Activated B cell treated with CpG ODN at 0.5 μM for 24 hours (primary cell): ENCODE measurements at regions of chr1 and their contacts with region 1.

Region 1: DNA sequence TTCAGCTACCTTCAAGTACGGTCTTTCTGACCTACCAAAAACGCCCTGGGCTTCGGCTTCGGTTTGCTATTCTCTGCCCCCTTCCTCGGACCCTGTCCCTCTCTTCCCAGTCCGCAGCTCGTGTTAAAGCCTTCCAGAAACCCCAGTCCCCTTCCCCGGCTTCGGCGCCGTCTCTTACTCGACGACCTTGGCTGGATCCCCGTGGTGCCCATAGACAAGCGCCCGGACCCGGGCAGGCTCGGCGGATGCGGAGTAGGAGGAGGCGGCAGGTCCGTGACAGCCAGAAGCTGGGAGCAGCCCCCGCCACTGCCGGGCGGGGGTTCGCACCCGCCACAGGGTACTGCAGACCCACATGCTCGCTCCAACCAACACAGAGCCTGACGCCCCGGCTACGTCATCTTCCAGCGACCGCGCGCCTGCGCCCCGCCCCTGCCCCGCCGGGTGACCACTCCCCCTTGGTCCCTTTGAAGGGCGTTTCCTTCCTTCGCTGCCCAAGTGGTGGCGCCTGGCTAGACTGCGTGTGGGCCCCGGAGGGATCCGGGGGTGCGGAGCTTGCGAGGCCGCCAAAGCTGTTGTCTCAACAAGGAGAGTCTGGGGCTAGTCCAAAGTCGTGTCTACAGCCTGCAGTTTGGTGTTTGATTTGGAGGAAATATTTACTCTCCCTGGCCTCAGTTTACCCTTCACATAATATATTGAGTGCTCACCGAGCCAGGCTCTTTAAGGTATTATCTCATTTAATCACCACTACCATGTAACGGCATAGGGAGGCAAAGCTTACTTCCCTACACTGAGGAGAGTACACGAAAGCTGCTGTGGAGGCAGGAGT is at the start of gene MECR:
- DNase-seq: peak; percentile 98
- ATAC-seq: peak; percentile 97
- H3K4me3 Mint-ChIP-seq: peak within 1 kb of the TSS; percentile 93
- H3K27ac Mint-ChIP-seq: peak within 1 kb of the TSS; percentile 84
- H3K4me1 Mint-ChIP-seq: peaks cover 18% of the 10 kb centered on the region
- H3K27me3 Mint-ChIP-seq: peaks cover 11% of the 10 kb centered on the region
- CTCF ChIP-seq: no peak
- total RNA-seq, gene MECR: 18.7 and 23.7 TPM in 2 replicates

Region 2: DNA sequence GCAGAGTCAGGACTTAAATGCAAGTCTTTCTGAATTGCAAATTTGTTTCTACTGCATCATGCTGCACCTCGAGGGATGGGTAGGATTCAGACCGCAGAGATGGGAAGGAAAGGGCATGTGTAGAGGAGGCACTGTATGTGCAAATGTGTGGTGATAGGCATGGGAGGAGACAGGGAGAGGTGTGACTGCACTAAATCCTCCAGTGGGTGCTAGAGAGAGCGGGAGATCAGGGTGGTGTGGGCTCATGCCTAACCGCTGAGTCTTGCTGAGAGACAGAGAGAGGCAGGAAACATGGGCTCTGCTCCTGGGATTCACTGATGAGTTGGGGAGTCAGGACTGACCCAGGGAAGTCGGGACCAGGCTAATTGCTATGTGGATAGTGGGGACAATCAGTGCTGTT is 66.7 kb after region 1 on chr1:
- CTCF ChIA-PET with region 1: no interaction called
- POLR2A ChIA-PET with region 1: no interaction called
- intact Hi-C with region 1: no loop called
- DNase-seq: no peak
- ATAC-seq: no peak
- H3K4me3 Mint-ChIP-seq: no peak overlapping the region
- H3K27ac Mint-ChIP-seq: no peak overlapping the region
- H3K4me1 Mint-ChIP-seq: no peaks in the 10 kb centered on the region
- H3K27me3 Mint-ChIP-seq: peaks cover 17% of the 10 kb centered on the region
- CTCF ChIP-seq: no peak

Region 3: DNA sequence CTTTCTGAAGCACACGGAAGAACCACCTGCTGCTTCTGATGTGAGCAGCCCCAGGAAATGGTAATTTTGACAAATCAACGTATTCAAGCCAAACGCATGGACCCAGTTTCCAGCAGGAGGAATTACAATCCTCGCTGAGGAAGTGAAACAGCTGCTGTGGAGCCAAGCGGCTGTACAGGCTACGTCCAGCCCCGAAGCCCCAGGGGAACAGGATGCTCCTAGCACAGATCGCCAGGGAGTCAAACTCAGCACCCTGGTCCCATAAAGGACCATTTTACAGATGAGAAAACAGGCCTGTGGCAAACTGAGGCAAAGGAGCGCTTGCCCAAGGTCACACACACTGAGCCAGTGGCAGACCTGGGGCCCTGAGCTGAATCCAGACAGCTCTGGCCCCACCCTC is 113.6 kb after region 1 on chr1:
- CTCF ChIA-PET with region 1: no interaction called
- POLR2A ChIA-PET with region 1: no interaction called
- intact Hi-C with region 1: no loop called
- DNase-seq: no peak
- ATAC-seq: no peak
- H3K4me3 Mint-ChIP-seq: no peak overlapping the region
- H3K27ac Mint-ChIP-seq: no peak overlapping the region
- H3K4me1 Mint-ChIP-seq: no peaks in the 10 kb centered on the region
- H3K27me3 Mint-ChIP-seq: peaks cover 27% of the 10 kb centered on the region
- CTCF ChIP-seq: no peak

Region 4: GRCh38 chr1:29498126-29499120 is 267.7 kb after region 1 on chr1:
- CTCF ChIA-PET with region 1: no interaction called
- POLR2A ChIA-PET with region 1: no interaction called
- intact Hi-C with region 1: no loop called
- DNase-seq: no peak
- ATAC-seq: no peak
- H3K4me3 Mint-ChIP-seq: no peak overlapping the region
- H3K27ac Mint-ChIP-seq: no peak overlapping the region
- H3K4me1 Mint-ChIP-seq: no peaks in the 10 kb centered on the region
- H3K27me3 Mint-ChIP-seq: peaks cover 18% of the 10 kb centered on the region
- CTCF ChIP-seq: no peak

Region 5: GRCh38 chr1:30232288-30232899 is 1001.6 kb after region 1 on chr1:
- CTCF ChIA-PET with region 1: no interaction called
- POLR2A ChIA-PET with region 1: no interaction called
- intact Hi-C with region 1: loop called (anchors 10 kb)
- DNase-seq: no peak
- ATAC-seq: no peak
- H3K4me3 Mint-ChIP-seq: no peak overlapping the region
- H3K27ac Mint-ChIP-seq: no peak overlapping the region
- H3K4me1 Mint-ChIP-seq: no peaks in the 10 kb centered on the region
- H3K27me3 Mint-ChIP-seq: peaks cover 8% of the 10 kb centered on the region
- CTCF ChIP-seq: no peak